Heart right ventricle (tissue), 16 donors: ENCODE measurements at regions of chr21 and their contacts with region 1.

Region 1: DNA sequence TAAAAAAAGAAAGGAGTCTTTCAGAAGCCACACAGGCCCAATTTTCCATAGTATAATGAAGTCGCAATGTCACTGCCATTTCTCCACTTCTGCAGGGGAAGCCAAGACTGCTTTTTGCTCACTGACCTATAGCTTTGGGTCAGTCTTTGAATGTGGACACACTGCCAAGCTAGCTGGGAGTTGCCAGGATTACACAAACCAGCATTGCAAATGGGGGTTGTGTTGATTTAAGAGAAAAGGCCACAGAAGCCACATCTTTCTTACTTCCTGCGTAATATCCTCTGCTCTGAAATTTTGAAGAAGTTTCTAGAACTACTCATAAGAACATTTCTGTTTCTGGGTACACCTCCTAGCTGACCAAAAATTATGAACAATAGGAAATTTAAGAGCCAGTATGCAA is 45.8 kb upstream of the SAMSN1 start:
- DNase-seq: peak in 1 of 2 donors; percentile 11
- ATAC-seq: peak in 6 of 8 donors; percentile 30 to 79 (median 48)
- H3K4me3 ChIP-seq: no peak overlapping the region
- H3K27ac ChIP-seq: peak overlapping the region in 1 of 10 donors; percentile 90
- H3K4me1 ChIP-seq: peaks cover 0 to 39% (median 0%) of the 10 kb centered on the region in 9 donors
- H3K27me3 ChIP-seq: no peaks in the 10 kb centered on the region
- CTCF ChIP-seq: no peak

Region 2: GRCh38 chr21:14273736-14274538 is 317.9 kb before region 1 on chr21:
- intact Hi-C with region 1: no loop called
- DNase-seq: peak; percentile 26 to 71
- ATAC-seq: peak; percentile 84 to 98 (median 94)
- H3K4me3 ChIP-seq: peak overlapping the region in 7 of 10 donors; percentile 18 to 41 (median 26)
- H3K27ac ChIP-seq: no peak overlapping the region
- H3K4me1 ChIP-seq: peaks cover 0 to 9% (median 0%) of the 10 kb centered on the region in 9 donors
- H3K27me3 ChIP-seq: peaks cover 0 to 27% (median 20%) of the 10 kb centered on the region in 7 donors
- CTCF ChIP-seq: no peak

Region 3: GRCh38 chr21:14523234-14523633 is 68.6 kb before region 1 on chr21:
- intact Hi-C with region 1: loop called in 1 of 10 experiments (anchors 10 kb)
- DNase-seq: no peak
- ATAC-seq: peak in 7 of 8 donors; percentile 36 to 79 (median 50)
- H3K4me3 ChIP-seq: no peak overlapping the region
- H3K27ac ChIP-seq: peak overlapping the region in 2 of 10 donors; percentile 4 to 76
- H3K4me1 ChIP-seq: peaks cover 0 to 93% (median 0%) of the 10 kb centered on the region in 9 donors
- H3K27me3 ChIP-seq: no peaks in the 10 kb centered on the region
- CTCF ChIP-seq: no peak

Region 4: GRCh38 chr21:14613486-14614224 is 21.8 kb after region 1 on chr21:
- intact Hi-C with region 1: loop called in 1 of 10 experiments (anchors 2 kb)
- DNase-seq: no peak
- ATAC-seq: no peak
- H3K4me3 ChIP-seq: no peak overlapping the region
- H3K27ac ChIP-seq: no peak overlapping the region
- H3K4me1 ChIP-seq: peaks cover 0 to 11% (median 0%) of the 10 kb centered on the region in 9 donors
- H3K27me3 ChIP-seq: no peaks in the 10 kb centered on the region
- CTCF ChIP-seq: no peak

Region 5: DNA sequence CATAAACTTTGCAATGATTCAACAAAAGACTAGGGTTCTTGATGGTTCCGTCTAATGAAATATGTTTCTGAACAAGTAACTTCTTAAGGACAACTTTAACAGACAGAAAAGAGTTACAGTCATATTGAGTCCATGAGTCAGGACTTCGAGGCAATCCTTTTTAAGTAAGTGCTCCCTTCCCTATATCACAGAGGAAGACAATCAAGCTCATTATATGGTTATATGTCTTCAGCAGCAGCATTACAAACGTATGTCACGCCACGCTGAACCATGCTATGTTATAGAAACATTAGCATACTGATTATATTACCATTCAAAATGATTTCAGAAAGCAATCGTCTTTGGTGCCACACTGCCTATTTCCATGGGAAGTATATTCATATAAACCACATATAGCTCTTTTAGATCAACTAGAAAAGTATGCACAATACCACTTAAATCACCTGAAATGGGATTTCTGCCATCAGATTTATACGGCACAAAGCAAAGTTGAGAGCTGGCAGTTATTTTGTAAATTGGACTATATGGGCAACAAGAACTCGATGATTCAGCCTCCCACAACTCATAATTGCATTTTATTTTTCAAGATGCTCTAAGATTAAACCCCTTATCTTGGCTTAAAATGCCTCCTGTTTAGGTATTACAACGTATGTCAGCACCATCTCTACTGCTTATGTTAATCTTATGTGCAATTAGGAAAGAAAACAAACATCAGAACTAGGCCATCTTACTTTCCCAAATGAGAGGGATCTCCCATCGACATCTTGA is 65.5 kb after region 1 on chr21:
- intact Hi-C with region 1: loop called in 1 of 10 experiments (anchors 10 kb)
- DNase-seq: no peak
- ATAC-seq: no peak
- H3K4me3 ChIP-seq: no peak overlapping the region
- H3K27ac ChIP-seq: no peak overlapping the region
- H3K4me1 ChIP-seq: no peaks in the 10 kb centered on the region
- H3K27me3 ChIP-seq: no peaks in the 10 kb centered on the region
- CTCF ChIP-seq: no peak